ENCODE measurements at regions of chr10 and their contacts with region 1.

Region 1: GRCh38 chr10:17430647-17431355 is 23.6 kb downstream of the ST8SIA6 start:
- DNase-seq: peak in 1 of 2 donors; percentile 83
- H3K4me3 ChIP-seq: peak overlapping the region in 1 of 2 donors; percentile 3
- H3K27ac ChIP-seq: no peak overlapping the region
- H3K4me1 ChIP-seq: peaks cover 0 to 3% of the 10 kb centered on the region in 2 donors
- H3K27me3 ChIP-seq: no peaks in the 10 kb centered on the region
- CTCF ChIP-seq: peak; percentile 55 to 92 (median 87)

Region 2: DNA sequence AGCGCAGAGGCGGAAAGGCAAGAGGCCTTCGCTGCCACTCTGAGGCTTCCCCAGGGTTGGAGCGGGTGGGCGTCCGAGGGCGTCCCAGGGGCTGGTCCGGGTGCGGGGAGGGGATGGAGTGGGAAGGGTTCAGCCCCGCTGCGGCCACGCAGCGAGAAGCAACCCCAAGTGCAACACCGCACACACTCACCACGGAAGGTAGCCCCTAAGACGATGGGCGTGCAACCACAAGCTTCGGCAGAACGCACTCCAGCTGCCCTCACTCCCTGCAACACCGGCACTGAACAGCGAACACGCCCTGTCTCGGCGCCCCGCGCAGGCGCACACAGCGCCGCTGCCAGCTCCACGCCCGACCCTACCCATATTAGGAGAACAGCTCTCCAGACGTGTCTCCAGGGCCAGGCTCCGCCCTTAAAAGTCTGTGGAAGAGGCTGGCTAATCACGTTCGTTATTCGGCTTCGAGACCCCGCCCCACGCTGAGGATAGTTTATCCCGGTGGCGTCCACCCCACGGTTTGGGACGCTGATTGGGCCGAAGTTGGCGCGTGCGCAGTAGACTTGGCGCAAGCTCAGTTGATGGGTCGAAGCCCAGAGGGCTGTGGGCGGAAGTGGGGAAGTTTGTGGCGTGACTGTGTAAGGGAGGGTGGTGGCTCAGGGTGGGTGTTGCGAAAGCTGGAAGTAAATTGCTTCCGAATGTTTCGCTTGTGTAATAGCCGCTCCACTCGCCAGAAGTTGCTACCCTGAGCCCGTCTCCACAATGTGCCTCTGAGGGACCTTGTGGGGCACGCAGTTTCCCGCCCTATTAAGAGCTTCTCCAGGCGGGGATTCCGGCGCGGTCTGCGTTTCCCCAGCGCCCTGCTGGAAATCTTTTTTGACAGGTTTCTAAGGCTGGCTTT is 613.4 kb before region 1 on chr10 and contains the start of gene RSU1:
- intact Hi-C with region 1: no loop called
- DNase-seq: peak; percentile 100
- H3K4me3 ChIP-seq: peak within 1 kb of the TSS; percentile 61 to 88
- H3K27ac ChIP-seq: peak within 1 kb of the TSS; percentile 91 to 95
- H3K4me1 ChIP-seq: peaks cover 0 to 29% of the 10 kb centered on the region in 2 donors
- H3K27me3 ChIP-seq: no peaks in the 10 kb centered on the region
- CTCF ChIP-seq: no peak
- total RNA-seq, gene RSU1: 82.2 TPM

Region 3: GRCh38 chr10:16843252-16843870 is 587.4 kb before region 1 on chr10:
- intact Hi-C with region 1: loop called (anchors 5 kb)
- DNase-seq: no peak
- H3K4me3 ChIP-seq: no peak overlapping the region
- H3K27ac ChIP-seq: no peak overlapping the region
- H3K4me1 ChIP-seq: peaks cover 5 to 13% of the 10 kb centered on the region in 2 donors
- H3K27me3 ChIP-seq: no peaks in the 10 kb centered on the region
- CTCF ChIP-seq: peak; percentile 62 to 69 (median 67)

Region 4: DNA sequence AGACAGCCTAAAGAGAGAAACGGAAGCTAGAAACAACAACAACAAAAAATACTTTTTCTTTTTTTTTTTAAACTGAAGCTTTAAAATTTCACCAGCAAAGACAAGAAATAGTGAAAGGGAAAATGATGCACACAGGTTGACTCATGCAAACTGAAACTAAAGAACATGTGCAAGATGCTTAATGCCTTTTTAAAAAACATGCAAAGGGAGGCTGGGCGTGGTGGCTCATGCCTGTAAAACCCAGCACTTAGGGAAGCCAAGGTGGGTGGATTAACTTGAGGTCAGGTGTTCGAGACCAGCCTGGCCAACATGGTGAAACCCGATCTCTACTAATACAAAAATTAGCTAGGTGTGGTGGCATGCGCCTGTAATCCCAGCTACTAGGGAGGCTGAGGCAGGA is 286.0 kb before region 1 on chr10:
- intact Hi-C with region 1: no loop called
- DNase-seq: no peak
- H3K4me3 ChIP-seq: no peak overlapping the region
- H3K27ac ChIP-seq: no peak overlapping the region
- H3K4me1 ChIP-seq: peaks cover 3 to 25% of the 10 kb centered on the region in 2 donors
- H3K27me3 ChIP-seq: no peaks in the 10 kb centered on the region
- CTCF ChIP-seq: no peak

Region 5: DNA sequence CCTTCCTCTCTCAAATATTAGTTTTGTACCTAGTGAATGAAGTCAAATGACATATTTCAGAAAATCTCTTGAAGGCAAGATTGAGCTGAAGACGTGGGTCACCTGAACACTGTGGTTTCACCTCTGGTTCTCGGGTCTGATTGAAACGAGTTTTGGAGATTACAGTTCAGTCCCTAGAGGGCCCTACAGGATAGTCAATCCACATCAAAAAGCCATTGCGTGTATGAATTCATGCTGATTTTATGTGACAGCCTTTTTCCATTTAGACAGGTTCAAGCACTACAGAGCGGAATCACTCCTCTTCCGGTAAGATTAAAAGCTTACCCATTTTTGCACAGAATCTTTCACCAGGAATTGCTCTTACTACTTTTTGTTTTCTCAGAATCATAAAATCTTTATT is 140.6 kb before region 1 on chr10:
- intact Hi-C with region 1: loop called (anchors 5 kb)
- DNase-seq: no peak
- H3K4me3 ChIP-seq: no peak overlapping the region
- H3K27ac ChIP-seq: no peak overlapping the region
- H3K4me1 ChIP-seq: no peaks in the 10 kb centered on the region
- H3K27me3 ChIP-seq: no peaks in the 10 kb centered on the region
- CTCF ChIP-seq: no peak

Region 6: GRCh38 chr10:17344206-17344605 is 86.6 kb before region 1 on chr10:
- intact Hi-C with region 1: no loop called
- DNase-seq: no peak
- H3K4me3 ChIP-seq: no peak overlapping the region
- H3K27ac ChIP-seq: no peak overlapping the region
- H3K4me1 ChIP-seq: peaks cover 0 to 8% of the 10 kb centered on the region in 2 donors
- H3K27me3 ChIP-seq: no peaks in the 10 kb centered on the region
- CTCF ChIP-seq: no peak

Region 7: DNA sequence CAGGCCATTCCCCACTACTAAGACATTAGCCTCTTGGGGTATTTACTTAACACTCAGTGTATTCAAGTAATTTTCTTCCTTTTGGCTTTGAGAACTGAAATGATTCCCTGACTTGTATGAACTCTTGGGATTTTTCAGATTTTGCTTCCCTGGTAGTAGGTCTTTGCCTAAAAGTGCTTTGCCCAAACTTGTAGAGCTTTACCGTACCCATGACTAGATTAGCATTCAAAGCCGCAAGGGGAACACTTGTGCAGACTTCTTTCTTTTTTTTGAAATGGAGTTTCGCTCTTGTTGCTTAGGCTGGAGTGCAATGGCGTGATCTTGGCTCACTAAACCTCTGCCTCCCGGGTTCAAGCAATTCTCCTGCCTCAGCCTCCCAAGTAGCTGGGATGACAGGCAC is 207.1 kb after region 1 on chr10:
- intact Hi-C with region 1: no loop called
- DNase-seq: no peak
- H3K4me3 ChIP-seq: no peak overlapping the region
- H3K27ac ChIP-seq: no peak overlapping the region
- H3K4me1 ChIP-seq: peaks cover 0 to 2% of the 10 kb centered on the region in 2 donors
- H3K27me3 ChIP-seq: no peaks in the 10 kb centered on the region
- CTCF ChIP-seq: no peak

Measured in ascending aorta (tissue), 2 donors.